Activated B cell treated with CpG ODN at 0.5 μM for 24 hours (primary cell): ENCODE measurements at regions of chr17 and their contacts with region 1.

Region 1: DNA sequence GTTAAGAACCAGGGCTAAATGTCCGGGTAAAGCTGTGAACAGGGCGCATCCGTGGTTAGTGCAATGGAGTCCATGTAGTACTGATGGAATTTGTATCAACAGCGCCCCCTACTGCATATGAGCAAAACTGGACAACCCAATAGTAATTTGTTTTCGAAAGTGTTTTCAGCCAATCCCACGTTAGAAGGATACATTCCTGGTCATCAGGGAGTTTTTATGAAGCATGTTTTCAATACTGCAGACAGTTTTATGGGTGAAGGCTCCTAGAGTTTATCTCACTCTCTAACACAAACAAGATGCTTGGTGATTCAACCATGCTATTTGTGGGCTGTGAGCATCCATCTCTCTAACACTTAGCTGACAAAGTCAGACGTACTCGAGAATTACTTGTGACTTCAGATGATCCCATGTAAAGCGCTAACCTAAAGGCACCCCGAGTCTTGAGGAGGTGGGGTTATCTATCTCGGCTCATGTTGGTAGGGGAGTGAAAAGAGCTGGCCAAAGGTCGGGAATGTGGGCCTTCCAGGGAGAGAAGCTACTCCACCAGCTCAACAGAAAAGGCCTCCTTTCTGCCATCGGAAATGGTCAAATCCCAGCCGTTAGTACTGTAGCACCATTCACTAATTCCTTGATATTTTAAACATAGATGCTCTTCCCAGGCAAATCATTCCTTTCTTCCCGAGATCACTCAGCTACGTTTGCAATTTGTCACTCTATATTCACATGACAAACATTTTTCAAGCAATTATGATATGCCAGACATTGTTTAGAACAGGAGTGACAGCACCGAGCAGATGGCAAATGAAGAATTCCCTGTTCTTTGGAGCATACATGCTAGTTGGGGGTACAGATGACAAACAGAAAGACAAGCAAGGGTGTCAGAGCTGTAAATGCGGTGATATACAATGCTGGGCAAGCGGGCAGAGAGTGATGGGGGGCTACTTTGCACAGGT is 46.9 kb upstream of the HNF1B start:
- DNase-seq: no peak
- ATAC-seq: peak; percentile 97
- H3K4me3 Mint-ChIP-seq: no peak overlapping the region
- H3K27ac Mint-ChIP-seq: no peak overlapping the region
- H3K4me1 Mint-ChIP-seq: peaks cover 19% of the 10 kb centered on the region
- H3K27me3 Mint-ChIP-seq: peaks cover 11% of the 10 kb centered on the region
- CTCF ChIP-seq: no peak

Region 2: DNA sequence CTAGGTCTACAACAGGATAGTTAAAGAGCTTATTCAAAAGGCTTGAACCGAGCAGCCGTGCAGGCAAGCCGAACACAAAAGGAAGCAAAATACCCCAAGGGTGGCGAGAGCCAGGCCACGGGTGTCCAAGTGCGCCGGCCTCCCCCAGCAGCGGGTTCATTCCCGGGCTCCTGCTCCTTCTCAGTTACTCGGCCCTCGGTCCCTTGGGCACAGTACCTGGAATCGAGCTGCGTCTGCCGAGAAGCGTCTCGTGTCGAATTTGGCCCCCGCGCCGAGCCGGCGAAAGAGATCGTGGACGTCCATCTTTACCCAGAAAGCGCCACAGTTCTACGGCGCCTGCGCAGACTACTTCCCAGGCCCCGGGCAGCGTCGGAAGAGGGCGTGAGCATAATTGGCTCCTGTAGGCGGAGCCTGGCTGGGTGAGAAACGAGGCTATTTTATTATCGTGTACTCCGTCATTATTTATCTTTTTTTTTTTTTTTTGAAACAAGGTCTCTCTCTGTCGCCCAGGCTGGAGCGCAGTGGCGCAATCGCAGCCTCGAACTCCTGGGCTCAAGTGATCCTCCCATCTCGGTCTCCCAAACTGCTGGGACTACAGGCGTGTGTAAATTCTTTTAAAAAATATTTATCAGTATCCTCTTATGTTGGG is 148.5 kb before region 1 on chr17 and contains the start of gene DDX52:
- CTCF ChIA-PET with region 1: interaction called, 3 read pairs
- POLR2A ChIA-PET with region 1: no interaction called
- intact Hi-C with region 1: loop called (anchors 2 kb)
- DNase-seq: peak; percentile 78
- ATAC-seq: peak; percentile 99
- H3K4me3 Mint-ChIP-seq: peak within 1 kb of the TSS; percentile 95
- H3K27ac Mint-ChIP-seq: peak within 1 kb of the TSS; percentile 90
- H3K4me1 Mint-ChIP-seq: peaks cover 38% of the 10 kb centered on the region
- H3K27me3 Mint-ChIP-seq: peaks cover 9% of the 10 kb centered on the region
- CTCF ChIP-seq: no peak
- total RNA-seq, gene DDX52: 35.6 and 39.9 TPM in 2 replicates

Region 3: DNA sequence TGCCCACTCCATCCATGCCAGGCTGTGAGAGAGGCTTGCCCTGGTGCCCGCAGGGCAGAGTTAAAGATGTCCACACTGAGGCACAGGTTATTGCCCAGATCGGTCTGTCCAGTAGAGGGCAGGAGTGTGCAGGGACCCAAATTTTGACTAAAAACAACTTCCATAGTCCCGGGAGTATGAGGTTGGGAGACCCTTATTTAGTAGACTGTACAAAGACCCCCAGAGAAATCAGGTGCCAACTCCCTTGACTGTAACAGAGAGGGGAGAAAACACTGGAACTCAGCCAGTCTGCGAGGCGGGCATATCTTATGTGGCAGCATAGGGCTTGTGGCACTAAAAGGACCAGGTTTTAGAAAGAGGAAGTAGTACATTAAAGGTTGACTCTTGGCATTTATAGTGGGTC is 90.2 kb before region 1 on chr17:
- CTCF ChIA-PET with region 1: interaction called, 84 read pairs
- POLR2A ChIA-PET with region 1: interaction called, 7 read pairs
- intact Hi-C with region 1: loop called (anchors 1 kb)
- DNase-seq: peak; percentile 44
- ATAC-seq: peak; percentile 84
- H3K4me3 Mint-ChIP-seq: peak overlapping the region; percentile 76
- H3K27ac Mint-ChIP-seq: peak overlapping the region; percentile 57
- H3K4me1 Mint-ChIP-seq: peaks cover 17% of the 10 kb centered on the region
- H3K27me3 Mint-ChIP-seq: peaks cover 6% of the 10 kb centered on the region
- CTCF ChIP-seq: peak; percentile 84

Region 4: DNA sequence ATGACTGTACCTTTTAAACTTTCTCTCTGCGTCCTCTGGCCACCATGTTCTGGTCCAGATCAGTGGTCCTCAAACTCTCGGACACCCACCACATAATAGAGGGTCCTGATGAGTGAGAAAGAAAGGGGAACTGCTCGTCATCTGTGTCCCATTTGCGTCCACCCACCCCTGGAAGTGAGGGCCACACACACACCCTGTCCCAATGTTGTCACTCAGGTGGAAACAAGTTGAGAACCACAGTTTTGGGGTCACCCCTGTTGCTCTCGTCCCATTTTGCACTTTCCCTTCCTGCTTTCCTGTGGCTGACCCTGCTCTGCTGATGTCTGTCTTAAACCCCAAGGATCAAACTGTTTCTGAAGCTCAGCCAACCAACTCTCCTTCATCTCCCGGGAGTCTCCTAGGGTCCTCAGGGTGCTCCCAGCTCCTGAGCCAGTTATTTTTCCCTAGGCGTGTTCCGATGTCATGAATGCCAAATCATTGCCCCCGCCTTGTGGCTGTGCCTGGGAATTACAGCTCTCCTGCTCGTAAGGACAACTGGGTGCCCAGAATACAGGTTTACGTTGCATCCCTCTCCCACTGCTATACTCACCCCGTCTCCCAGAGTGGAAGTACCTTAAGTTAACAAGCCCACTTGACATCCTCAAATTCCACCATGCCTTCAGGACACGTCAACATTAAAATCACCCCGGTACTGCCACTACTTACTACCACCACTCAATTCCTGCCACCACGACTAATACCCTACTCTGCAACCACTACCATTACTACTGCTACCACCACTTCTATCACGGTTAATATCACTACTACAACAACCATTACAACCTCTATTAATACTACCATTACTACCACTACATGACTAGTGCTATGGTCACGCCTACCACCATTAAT is 20.8 kb before region 1 on chr17:
- CTCF ChIA-PET with region 1: interaction called, 23 read pairs
- POLR2A ChIA-PET with region 1: interaction called, 39 read pairs
- intact Hi-C with region 1: loop called (anchors 1 kb)
- DNase-seq: no peak
- ATAC-seq: no peak
- H3K4me3 Mint-ChIP-seq: no peak overlapping the region
- H3K27ac Mint-ChIP-seq: no peak overlapping the region
- H3K4me1 Mint-ChIP-seq: peaks cover 71% of the 10 kb centered on the region
- H3K27me3 Mint-ChIP-seq: no peaks in the 10 kb centered on the region
- CTCF ChIP-seq: no peak

Region 5: DNA sequence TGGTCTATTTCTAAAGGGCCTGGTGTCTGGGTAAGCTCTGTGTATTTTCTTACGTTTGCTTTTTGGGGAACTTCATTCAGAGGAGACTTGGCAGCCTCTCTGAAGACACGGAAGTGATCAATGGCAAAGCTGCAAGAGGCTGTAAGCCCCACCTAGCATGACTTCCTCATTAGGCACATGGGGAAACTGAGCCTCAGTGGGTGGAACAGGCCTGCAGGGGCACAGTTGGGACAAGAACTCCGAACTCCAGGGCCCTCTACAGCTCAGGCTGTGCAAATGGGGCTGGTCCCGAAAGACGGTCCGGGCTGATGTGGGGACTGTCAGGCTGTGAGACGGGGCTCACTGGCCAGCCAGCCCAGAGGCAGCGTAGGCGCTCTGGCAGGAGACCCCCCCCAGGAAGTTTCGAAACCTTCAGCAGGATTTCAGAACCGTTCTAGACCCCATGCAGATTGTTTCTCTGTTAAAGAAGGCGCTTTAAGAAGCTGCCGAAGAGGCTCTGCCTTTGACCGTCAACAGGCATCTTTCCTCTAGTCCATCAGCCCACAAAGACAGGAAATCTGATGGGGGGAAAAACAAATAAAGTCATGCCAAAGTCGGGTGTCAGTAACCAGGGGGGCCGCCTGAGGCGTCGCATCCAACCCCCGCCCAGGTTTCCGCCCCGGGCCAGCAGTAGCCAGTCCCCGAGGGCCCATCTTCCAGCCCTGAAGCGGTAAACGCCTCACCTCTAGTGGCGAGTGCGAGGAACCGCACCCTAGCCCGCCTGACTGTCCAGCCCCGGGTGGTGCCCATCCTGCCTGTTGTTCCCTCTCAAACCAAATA is 52.6 kb after region 1 on chr17:
- CTCF ChIA-PET with region 1: interaction called, 6 read pairs
- POLR2A ChIA-PET with region 1: no interaction called
- intact Hi-C with region 1: loop called (anchors 5 kb)
- DNase-seq: peak; percentile 59
- ATAC-seq: peak; percentile 89
- H3K4me3 Mint-ChIP-seq: peak overlapping the region; percentile 79
- H3K27ac Mint-ChIP-seq: peak overlapping the region; percentile 83
- H3K4me1 Mint-ChIP-seq: peaks cover 51% of the 10 kb centered on the region
- H3K27me3 Mint-ChIP-seq: no peaks in the 10 kb centered on the region
- CTCF ChIP-seq: no peak